ENCODE measurements at regions of chr3 and their contacts with region 1.

Region 1: DNA sequence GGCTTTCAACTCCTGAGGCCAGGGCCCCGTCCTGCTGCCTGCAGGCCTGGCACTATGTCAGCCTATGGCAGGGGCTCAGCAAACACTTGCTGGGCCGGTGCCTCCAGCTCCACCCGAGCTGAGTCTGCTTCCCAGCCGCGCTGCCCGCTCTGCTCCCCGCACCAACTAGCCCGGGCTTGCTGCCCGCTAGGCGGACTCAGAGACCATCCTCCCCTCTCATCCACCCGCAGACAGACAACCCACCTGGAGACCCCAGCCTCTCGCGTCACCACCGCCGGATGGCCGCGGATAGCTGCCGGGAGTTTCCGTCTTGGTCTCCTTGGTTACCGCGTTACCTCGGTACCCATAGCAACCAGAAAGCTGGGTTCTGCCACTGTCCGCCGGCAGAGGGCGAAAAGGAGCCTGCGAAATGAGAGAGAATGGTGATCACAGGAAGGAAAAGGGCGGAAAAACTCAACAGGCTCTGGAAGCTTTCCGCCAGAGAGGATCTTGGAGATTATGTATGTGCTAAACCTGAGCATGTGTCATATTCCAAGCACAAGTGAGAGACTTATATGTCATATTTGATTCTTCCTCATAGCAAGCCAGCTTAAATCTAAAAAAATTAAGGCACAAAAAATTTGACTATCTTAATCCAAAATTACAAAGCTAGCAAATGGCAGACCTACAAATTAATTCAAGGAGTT is at the start of gene ZBBX:
- DNase-seq: peak; percentile 77
- H3K4me3 ChIP-seq: peak within 1 kb of the TSS; percentile 20 to 52 (median 51)
- H3K27ac ChIP-seq: no peak within 1 kb of the TSS
- H3K4me1 ChIP-seq: peaks cover 4% of the 10 kb centered on the region
- H3K27me3 ChIP-seq: no peaks in the 10 kb centered on the region
- CTCF ChIP-seq: peak; percentile 93 to 97
- total RNA-seq, gene ZBBX: not detected

Region 2: GRCh38 chr3:167354751-167355150 is 25.4 kb before region 1 on chr3:
- CTCF ChIA-PET with region 1: no interaction called
- dilution Hi-C with region 1: no loop called
- in situ Hi-C with region 1: no loop called
- intact Hi-C with region 1: no loop called
- DNase-seq: no peak
- H3K4me3 ChIP-seq: no peak overlapping the region
- H3K27ac ChIP-seq: no peak overlapping the region
- H3K4me1 ChIP-seq: no peaks in the 10 kb centered on the region
- H3K27me3 ChIP-seq: no peaks in the 10 kb centered on the region
- CTCF ChIP-seq: no peak

Region 3: DNA sequence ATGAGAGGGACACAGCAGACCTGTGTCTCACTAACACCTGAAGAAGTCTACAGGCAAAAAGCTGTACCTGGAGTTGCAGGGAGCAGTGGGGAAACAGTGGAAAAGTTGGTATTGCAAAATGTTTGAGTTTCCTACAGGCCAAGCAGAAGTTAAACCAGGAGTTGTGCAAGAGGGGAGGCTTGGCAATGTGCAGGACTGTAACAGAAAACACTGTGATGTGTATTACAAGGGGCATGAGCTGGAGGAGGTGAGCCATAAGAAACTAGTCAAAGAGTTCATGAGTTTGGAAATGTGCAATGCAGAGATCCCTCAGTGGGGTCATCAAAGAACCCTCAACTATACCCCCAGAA is 140.8 kb after region 1 on chr3:
- CTCF ChIA-PET with region 1: no interaction called
- dilution Hi-C with region 1: no loop called
- in situ Hi-C with region 1: no loop called
- intact Hi-C with region 1: no loop called
- DNase-seq: no peak
- H3K4me3 ChIP-seq: no peak overlapping the region
- H3K27ac ChIP-seq: no peak overlapping the region
- H3K4me1 ChIP-seq: no peaks in the 10 kb centered on the region
- H3K27me3 ChIP-seq: no peaks in the 10 kb centered on the region
- CTCF ChIP-seq: no peak

Region 4: DNA sequence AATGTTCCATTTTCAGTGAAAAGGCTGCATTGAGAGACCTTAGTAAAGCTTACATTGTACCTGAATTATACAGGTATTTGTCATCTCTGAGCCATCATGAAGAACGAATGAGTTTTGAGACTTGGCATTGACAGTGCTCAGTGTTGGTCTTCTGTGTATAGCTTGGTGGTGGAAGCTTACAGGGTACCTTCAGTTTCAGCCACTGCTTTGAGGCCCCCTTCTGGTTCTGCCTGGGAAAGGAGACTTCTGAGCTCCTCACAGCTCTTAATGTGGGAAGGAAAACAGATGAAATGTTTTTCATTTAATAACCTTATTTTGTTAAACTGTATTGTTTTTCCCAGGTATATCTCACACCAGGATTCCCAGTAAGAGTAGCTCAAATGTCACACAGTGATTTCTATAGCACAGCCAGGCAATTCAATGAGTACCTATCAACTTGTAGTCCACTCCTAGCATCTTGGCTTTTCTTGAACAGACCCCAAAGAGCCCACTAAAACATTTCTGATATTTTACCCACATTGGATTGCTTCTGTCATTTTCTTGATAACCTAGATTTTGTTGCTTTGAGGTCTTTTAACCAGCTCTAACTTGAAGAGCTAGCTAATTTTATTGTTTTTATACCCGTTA is 360.9 kb after region 1 on chr3:
- CTCF ChIA-PET with region 1: no interaction called
- dilution Hi-C with region 1: no loop called
- in situ Hi-C with region 1: no loop called
- intact Hi-C with region 1: loop called (anchors 1 kb)
- DNase-seq: peak; percentile 27
- H3K4me3 ChIP-seq: no peak overlapping the region
- H3K27ac ChIP-seq: no peak overlapping the region
- H3K4me1 ChIP-seq: no peaks in the 10 kb centered on the region
- H3K27me3 ChIP-seq: no peaks in the 10 kb centered on the region
- CTCF ChIP-seq: peak; percentile 32 to 53

Measured in mammary epithelial cell (primary cell).